ENCODE measurements at regions of chr13 and their contacts with region 1.

Region 1: GRCh38 chr13:79541426-79542049 is 60.6 kb downstream of the NDFIP2 start:
- DNase-seq: peak; percentile 49
- ATAC-seq: peak; percentile 73
- H3K4me3 ChIP-seq: no peak overlapping the region
- H3K27ac ChIP-seq: no peak overlapping the region
- H3K4me1 ChIP-seq: no peaks in the 10 kb centered on the region
- H3K27me3 ChIP-seq: no peaks in the 10 kb centered on the region
- CTCF ChIP-seq: peak; percentile 57 to 69 (median 59)
- EP300 ChIP-seq: no peak
- POLR2A ChIP-seq: no peak
- RAD21 ChIP-seq: peak; percentile 95

Region 2: GRCh38 chr13:79405829-79406596 is 135.5 kb before region 1 on chr13 and contains the start of gene RBM26:
- CTCF ChIA-PET with region 1: interaction called, 13 read pairs
- POLR2A ChIA-PET with region 1: no interaction called
- RAD21 ChIA-PET with region 1: interaction called, 6 read pairs
- SMC1A ChIA-PET with region 1: interaction called, 14 read pairs
- in situ Hi-C with region 1: no loop called
- intact Hi-C with region 1: no loop called
- DNase-seq: peak; percentile 76
- ATAC-seq: peak; percentile 73
- H3K4me3 ChIP-seq: peak within 1 kb of the TSS; percentile 99
- H3K27ac ChIP-seq: peak within 1 kb of the TSS; percentile 99
- H3K4me1 ChIP-seq: peaks cover 2% of the 10 kb centered on the region; the same call in 1 of the 2 replicates
- H3K27me3 ChIP-seq: no peaks in the 10 kb centered on the region
- CTCF ChIP-seq: no peak
- EP300 ChIP-seq: no peak
- POLR2A ChIP-seq: peak; percentile 95
- RAD21 ChIP-seq: no peak
- polyA plus RNA-seq, gene RBM26: 17.6 to 19.2 TPM

Region 3: GRCh38 chr13:79451500-79451962 is 90.0 kb before region 1 on chr13:
- CTCF ChIA-PET with region 1: interaction called, 4 read pairs
- POLR2A ChIA-PET with region 1: no interaction called
- RAD21 ChIA-PET with region 1: interaction called, 6 read pairs
- SMC1A ChIA-PET with region 1: interaction called, 19 read pairs
- in situ Hi-C with region 1: no loop called
- intact Hi-C with region 1: no loop called
- DNase-seq: peak; percentile 71
- ATAC-seq: peak; percentile 100
- H3K4me3 ChIP-seq: no peak overlapping the region
- H3K27ac ChIP-seq: no peak overlapping the region
- H3K4me1 ChIP-seq: peaks cover 10% of the 10 kb centered on the region; the same call in 1 of the 2 replicates
- H3K27me3 ChIP-seq: no peaks in the 10 kb centered on the region
- CTCF ChIP-seq: no peak
- EP300 ChIP-seq: peak in 1 of 2 experiments; percentile 35; a peak in 1 of 4 replicates
- POLR2A ChIP-seq: no peak
- RAD21 ChIP-seq: no peak

Region 4: GRCh38 chr13:79491715-79492114 is 49.8 kb before region 1 on chr13:
- CTCF ChIA-PET with region 1: interaction called, 6 read pairs
- POLR2A ChIA-PET with region 1: no interaction called
- RAD21 ChIA-PET with region 1: interaction called, 3 read pairs
- SMC1A ChIA-PET with region 1: interaction called, 17 read pairs
- in situ Hi-C with region 1: no loop called
- intact Hi-C with region 1: no loop called
- DNase-seq: no peak
- ATAC-seq: no peak
- H3K4me3 ChIP-seq: no peak overlapping the region
- H3K27ac ChIP-seq: no peak overlapping the region
- H3K4me1 ChIP-seq: peaks cover 4% of the 10 kb centered on the region
- H3K27me3 ChIP-seq: no peaks in the 10 kb centered on the region
- CTCF ChIP-seq: no peak
- EP300 ChIP-seq: no peak
- POLR2A ChIP-seq: no peak
- RAD21 ChIP-seq: no peak

Region 5: GRCh38 chr13:79560953-79561352 is 19.4 kb after region 1 on chr13:
- CTCF ChIA-PET with region 1: interaction called, 17 read pairs
- POLR2A ChIA-PET with region 1: no interaction called
- RAD21 ChIA-PET with region 1: interaction called, 14 read pairs
- SMC1A ChIA-PET with region 1: interaction called, 6 read pairs
- in situ Hi-C with region 1: no loop called
- intact Hi-C with region 1: no loop called
- DNase-seq: no peak
- ATAC-seq: no peak
- H3K4me3 ChIP-seq: no peak overlapping the region
- H3K27ac ChIP-seq: no peak overlapping the region
- H3K4me1 ChIP-seq: no peaks in the 10 kb centered on the region
- H3K27me3 ChIP-seq: no peaks in the 10 kb centered on the region
- CTCF ChIP-seq: no peak
- EP300 ChIP-seq: no peak
- POLR2A ChIP-seq: no peak
- RAD21 ChIP-seq: no peak

Region 6: GRCh38 chr13:80082396-80083080 is 541.0 kb after region 1 on chr13:
- CTCF ChIA-PET with region 1: no interaction called
- POLR2A ChIA-PET with region 1: no interaction called
- RAD21 ChIA-PET with region 1: no interaction called
- SMC1A ChIA-PET with region 1: no interaction called
- in situ Hi-C with region 1: no loop called
- intact Hi-C with region 1: no loop called
- DNase-seq: no peak
- ATAC-seq: no peak; the same call in 2 of the 3 replicates
- H3K4me3 ChIP-seq: no peak overlapping the region
- H3K27ac ChIP-seq: no peak overlapping the region
- H3K4me1 ChIP-seq: no peaks in the 10 kb centered on the region
- H3K27me3 ChIP-seq: no peaks in the 10 kb centered on the region
- CTCF ChIP-seq: no peak
- EP300 ChIP-seq: no peak
- POLR2A ChIP-seq: no peak
- RAD21 ChIP-seq: no peak

Measured in GM12878 (cell line).